Sigmoid colon (tissue), 7 donors: ENCODE measurements at regions of chr20 and their contacts with region 1.

Region 1: GRCh38 chr20:10474606-10475184 is 39.6 kb downstream of the SLX4IP start:
- DNase-seq: peak; percentile 71
- H3K4me3 ChIP-seq: no peak overlapping the region
- H3K27ac ChIP-seq: peak overlapping the region in 2 of 4 donors; percentile 7 to 15
- H3K4me1 ChIP-seq: peaks cover 0 to 19% (median 9%) of the 10 kb centered on the region in 4 donors
- H3K27me3 ChIP-seq: no peaks in the 10 kb centered on the region
- CTCF ChIP-seq: no peak
- EP300 ChIP-seq: no peak
- POLR2A ChIP-seq: no peak

Region 2: DNA sequence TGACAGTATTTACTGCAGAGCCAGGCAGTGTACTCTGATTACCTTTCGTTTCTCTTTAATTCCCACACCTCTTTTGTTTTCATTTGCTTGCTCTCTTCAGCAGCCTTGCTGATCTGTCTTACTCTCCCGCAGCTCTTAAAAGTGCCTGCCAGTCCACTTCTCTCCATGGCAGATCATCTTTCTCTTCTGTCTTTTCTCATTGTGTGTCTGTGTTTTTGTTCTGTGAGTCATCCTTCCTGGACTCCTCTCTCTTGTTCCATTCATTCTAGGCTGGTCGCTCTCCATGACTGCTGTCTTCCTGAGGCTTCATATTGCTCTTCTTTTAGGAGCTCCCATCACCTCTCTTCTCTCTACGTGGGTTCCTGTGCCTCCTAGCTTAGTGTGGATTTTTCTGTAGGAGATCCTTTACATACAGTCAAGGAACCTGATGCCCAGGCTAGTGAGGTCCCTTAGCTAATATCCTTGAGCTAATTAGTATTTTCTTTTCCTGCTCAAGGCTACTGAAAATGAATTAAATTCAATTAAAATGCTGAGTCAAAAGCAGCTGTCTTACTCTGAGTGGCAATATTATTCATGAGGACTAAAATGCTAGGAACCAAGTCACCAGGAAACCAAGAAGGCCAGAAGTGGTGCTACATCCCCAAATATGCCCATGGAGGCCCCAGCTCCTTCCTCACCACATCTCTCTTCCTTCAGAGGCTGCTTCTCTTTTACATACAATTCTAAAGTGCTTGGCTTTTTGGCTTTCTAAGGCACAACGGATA is 46.6 kb after region 1 on chr20:
- intact Hi-C with region 1: loop called (anchors 5 kb)
- DNase-seq: peak; percentile 82
- H3K4me3 ChIP-seq: no peak overlapping the region
- H3K27ac ChIP-seq: peak overlapping the region in 3 of 4 donors; percentile 75 to 86 (median 81)
- H3K4me1 ChIP-seq: peaks cover 0 to 62% (median 52%) of the 10 kb centered on the region in 4 donors
- H3K27me3 ChIP-seq: no peaks in the 10 kb centered on the region
- CTCF ChIP-seq: no peak
- EP300 ChIP-seq: peak; percentile 64 to 89 (median 83)
- POLR2A ChIP-seq: no peak

Region 3: DNA sequence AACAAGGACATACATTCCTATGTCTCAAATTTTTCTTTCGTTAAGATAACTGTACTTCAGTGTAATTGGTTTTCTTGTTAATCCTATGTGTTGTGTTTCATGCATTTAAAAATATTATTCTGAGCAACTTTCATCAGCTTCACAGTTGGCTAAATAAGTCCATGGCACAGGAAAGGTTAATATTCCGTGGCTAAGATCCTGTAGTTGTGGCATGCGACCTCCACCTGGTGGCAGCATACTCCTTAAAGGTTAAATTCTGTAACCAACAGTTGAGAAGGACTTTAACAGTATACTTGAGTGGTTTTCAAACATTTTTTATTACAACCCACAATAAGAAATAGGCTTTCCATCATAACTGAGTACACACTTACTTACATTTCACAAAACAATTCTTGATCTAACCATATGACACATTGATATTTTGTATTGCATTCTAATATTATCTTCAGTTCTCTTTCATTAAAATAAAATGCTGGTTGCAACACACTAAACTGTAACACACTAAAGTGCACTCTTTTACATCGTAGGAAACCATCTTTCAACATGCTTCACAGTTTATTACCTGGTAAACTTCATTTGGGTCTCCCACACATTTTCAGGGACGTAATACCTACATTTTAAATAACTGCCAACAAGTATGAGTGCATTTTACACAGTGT is 78.8 kb after region 1 on chr20:
- intact Hi-C with region 1: loop called (anchors 5 kb)
- DNase-seq: peak; percentile 79
- H3K4me3 ChIP-seq: no peak overlapping the region
- H3K27ac ChIP-seq: no peak overlapping the region
- H3K4me1 ChIP-seq: peaks cover 0 to 29% (median 15%) of the 10 kb centered on the region in 4 donors
- H3K27me3 ChIP-seq: no peaks in the 10 kb centered on the region
- CTCF ChIP-seq: peak; percentile 55 to 71 (median 66)
- EP300 ChIP-seq: no peak
- POLR2A ChIP-seq: no peak

Region 4: DNA sequence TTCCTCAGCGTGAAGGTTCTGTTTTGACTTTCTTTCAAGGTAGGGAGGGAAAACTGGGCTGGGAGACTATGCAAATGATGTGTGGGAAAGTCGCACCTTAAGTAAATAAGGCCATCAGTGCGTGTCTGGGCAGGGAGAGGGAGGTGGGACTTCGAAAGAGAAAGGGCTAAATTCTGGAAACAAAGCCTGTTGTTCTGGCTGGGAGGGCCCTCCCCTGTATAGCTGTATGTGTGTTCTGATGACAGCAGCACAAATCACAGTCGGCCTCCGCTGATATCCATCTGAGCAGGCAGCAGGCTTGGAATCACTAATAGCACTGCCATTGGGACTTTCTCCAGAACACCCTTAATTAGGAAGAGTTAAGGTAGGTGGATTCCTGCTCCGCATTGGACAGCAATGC is 179.9 kb after region 1 on chr20:
- intact Hi-C with region 1: loop called (anchors 5 kb)
- DNase-seq: no peak
- H3K4me3 ChIP-seq: no peak overlapping the region
- H3K27ac ChIP-seq: peak overlapping the region; percentile 55 to 87 (median 83)
- H3K4me1 ChIP-seq: peaks cover 0 to 89% (median 82%) of the 10 kb centered on the region in 4 donors
- H3K27me3 ChIP-seq: no peaks in the 10 kb centered on the region
- CTCF ChIP-seq: no peak
- EP300 ChIP-seq: no peak
- POLR2A ChIP-seq: no peak